MCF 10A (cell line): ENCODE measurements at regions of chr15 and their contacts with region 1.

Region 1: DNA sequence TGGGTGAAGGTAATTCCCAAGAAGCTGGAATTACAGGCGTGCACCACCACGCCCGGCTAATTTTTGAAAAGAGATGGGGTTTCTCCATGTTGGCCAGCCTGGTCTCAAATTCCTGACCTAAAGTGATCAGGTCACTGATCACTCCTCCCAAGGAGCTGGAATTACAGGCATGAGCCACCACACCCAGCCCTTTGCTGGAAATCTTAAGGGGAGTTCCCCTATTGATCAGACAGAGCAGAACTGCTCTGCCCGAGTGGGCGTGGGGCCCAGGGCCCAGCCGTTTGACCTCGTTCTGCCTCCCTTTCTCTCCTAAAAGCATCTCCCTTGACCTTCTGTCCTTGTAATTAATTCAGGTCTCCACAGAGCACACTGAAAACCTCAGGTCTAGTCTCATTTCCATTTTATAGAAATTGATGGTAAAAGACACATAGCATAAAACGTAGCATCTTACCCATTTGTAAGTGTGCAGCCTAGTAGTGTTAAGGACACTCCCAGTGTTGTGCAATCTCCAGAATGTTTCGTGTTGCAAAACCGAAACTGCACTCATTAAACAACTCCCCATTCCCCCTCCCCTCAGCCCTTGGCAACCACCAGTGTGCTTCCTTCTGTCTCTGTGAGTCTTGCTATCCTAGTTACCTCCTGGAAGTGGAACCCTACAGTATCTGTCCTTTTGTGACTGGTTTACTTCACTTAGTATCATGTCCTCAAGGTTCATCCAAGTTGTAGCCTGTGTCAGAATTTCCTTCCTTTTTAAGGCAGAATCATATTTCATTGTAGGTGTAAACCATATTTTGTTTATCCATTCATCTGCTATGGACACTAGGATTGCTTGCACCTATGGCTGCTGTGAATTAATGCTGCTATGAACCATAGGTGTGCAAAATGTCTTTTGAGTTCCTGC is 89.4 kb downstream of the SLCO3A1 start:
- DNase-seq: peak; percentile 99
- H3K4me3 Mint-ChIP-seq: peak overlapping the region; percentile 65
- H3K27ac Mint-ChIP-seq: peak overlapping the region; percentile 95
- H3K4me1 Mint-ChIP-seq: peaks cover 71% of the 10 kb centered on the region
- H3K27me3 Mint-ChIP-seq: no peaks in the 10 kb centered on the region
- CTCF ChIP-seq: no peak

Region 2: GRCh38 chr15:91522663-91523332 is 420.1 kb before region 1 on chr15:
- CTCF ChIA-PET with region 1: no interaction called
- POLR2A ChIA-PET with region 1: no interaction called
- intact Hi-C with region 1: loop called (anchors 5 kb)
- DNase-seq: peak; percentile 56
- H3K4me3 Mint-ChIP-seq: no peak overlapping the region
- H3K27ac Mint-ChIP-seq: no peak overlapping the region
- H3K4me1 Mint-ChIP-seq: peaks cover 13% of the 10 kb centered on the region
- H3K27me3 Mint-ChIP-seq: no peaks in the 10 kb centered on the region
- CTCF ChIP-seq: peak; percentile 43

Region 3: GRCh38 chr15:91652610-91653207 is 290.2 kb before region 1 on chr15:
- CTCF ChIA-PET with region 1: no interaction called
- POLR2A ChIA-PET with region 1: no interaction called
- intact Hi-C with region 1: no loop called
- DNase-seq: no peak
- H3K4me3 Mint-ChIP-seq: no peak overlapping the region
- H3K27ac Mint-ChIP-seq: no peak overlapping the region
- H3K4me1 Mint-ChIP-seq: no peaks in the 10 kb centered on the region
- H3K27me3 Mint-ChIP-seq: peaks cover 3% of the 10 kb centered on the region
- CTCF ChIP-seq: no peak

Region 4: DNA sequence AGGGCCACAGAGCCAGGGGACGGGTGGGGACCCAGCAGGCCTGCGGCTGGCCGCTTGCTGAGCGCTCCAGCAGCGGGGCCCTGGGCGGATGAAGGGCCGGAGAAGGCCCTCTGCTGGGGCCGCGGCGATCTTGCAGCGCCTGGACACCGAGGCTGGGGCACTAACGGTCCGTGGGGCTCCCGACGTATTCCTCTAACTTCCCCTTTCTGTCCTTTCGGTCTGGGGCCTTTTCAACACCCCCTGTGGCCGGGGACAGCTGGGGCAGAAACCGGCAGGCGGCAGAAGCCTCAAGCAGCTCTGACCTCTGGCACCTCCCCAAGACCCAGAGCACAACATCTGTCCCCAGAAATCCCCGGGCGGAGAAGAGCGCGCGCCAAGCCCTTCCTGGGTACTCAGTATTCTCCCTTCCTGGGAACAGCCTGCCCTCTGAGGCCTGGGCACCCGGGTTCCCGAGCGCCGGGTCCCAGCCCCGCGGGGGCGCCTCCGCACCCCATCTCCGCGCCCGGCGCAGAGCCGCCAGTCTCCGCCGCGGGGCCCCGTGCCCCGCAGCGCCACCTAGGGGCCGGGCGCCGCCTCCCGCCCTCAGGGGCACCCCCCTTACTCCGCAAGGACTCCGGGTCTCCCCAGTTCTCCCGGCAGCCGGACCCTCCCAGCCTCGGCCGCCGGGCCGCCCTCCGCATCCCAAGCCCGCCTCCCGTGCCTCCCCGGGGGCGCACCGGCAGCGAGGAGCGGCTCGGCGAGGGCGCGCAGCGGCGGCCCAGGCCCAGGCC is 90.0 kb before region 1 on chr15:
- CTCF ChIA-PET with region 1: interaction called, 152 read pairs
- POLR2A ChIA-PET with region 1: interaction called, 35 read pairs
- intact Hi-C with region 1: loop called (anchors 1 kb)
- DNase-seq: peak; percentile 66
- H3K4me3 Mint-ChIP-seq: peak overlapping the region; percentile 75
- H3K27ac Mint-ChIP-seq: peak overlapping the region; percentile 61
- H3K4me1 Mint-ChIP-seq: peaks cover 42% of the 10 kb centered on the region
- H3K27me3 Mint-ChIP-seq: no peaks in the 10 kb centered on the region
- CTCF ChIP-seq: peak; percentile 78

Region 5: DNA sequence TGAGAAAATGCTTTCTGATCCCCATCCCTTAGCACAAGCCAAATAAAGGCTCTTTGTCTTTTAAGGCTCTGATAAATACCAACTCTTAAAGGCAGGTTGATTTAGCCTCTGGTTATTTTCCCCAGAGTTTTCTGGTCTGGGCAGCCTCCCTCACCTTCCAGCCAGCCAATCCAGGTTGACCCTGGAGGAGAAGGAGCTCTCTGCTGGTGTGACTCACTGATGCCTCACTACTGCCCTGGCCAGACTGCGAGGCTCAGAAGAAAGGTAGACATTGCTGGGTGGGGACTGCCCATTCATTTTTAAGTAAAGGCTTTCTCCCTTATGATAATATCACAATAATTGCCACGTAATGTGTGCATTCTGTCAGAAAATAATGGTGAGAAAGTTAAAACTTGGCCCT is 52.3 kb before region 1 on chr15:
- CTCF ChIA-PET with region 1: interaction called, 14 read pairs
- POLR2A ChIA-PET with region 1: interaction called, 7 read pairs
- intact Hi-C with region 1: no loop called
- DNase-seq: peak; percentile 88
- H3K4me3 Mint-ChIP-seq: no peak overlapping the region
- H3K27ac Mint-ChIP-seq: peak overlapping the region; percentile 34
- H3K4me1 Mint-ChIP-seq: peaks cover 20% of the 10 kb centered on the region
- H3K27me3 Mint-ChIP-seq: no peaks in the 10 kb centered on the region
- CTCF ChIP-seq: no peak

Region 6: DNA sequence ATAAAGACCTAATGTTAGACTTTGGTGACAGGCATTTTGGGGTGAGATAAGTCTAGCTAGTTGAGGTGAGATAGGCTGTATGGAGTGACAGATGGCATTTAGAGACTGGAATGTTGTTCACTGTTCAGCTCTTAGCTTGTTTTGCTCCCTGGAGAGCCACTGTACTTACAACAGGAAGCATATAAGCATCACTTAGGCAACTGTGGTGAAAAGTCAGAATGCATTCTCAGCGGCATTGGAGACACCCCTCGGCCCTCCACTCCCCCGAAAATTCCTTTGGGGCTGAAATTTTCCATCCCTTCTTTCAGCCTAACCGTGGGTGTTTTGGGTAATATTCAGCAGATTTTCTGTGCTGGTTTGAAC is 16.0 kb before region 1 on chr15:
- CTCF ChIA-PET with region 1: interaction called, 21 read pairs
- POLR2A ChIA-PET with region 1: interaction called, 22 read pairs
- intact Hi-C with region 1: no loop called
- DNase-seq: no peak
- H3K4me3 Mint-ChIP-seq: no peak overlapping the region
- H3K27ac Mint-ChIP-seq: no peak overlapping the region
- H3K4me1 Mint-ChIP-seq: peaks cover 15% of the 10 kb centered on the region
- H3K27me3 Mint-ChIP-seq: no peaks in the 10 kb centered on the region
- CTCF ChIP-seq: no peak

Region 7: GRCh38 chr15:91981821-91982801 is 39.2 kb after region 1 on chr15:
- CTCF ChIA-PET with region 1: interaction called, 17 read pairs
- POLR2A ChIA-PET with region 1: no interaction called
- intact Hi-C with region 1: loop called (anchors 5 kb)
- DNase-seq: peak; percentile 13
- H3K4me3 Mint-ChIP-seq: no peak overlapping the region
- H3K27ac Mint-ChIP-seq: no peak overlapping the region
- H3K4me1 Mint-ChIP-seq: peaks cover 6% of the 10 kb centered on the region
- H3K27me3 Mint-ChIP-seq: no peaks in the 10 kb centered on the region
- CTCF ChIP-seq: peak; percentile 21

Region 8: DNA sequence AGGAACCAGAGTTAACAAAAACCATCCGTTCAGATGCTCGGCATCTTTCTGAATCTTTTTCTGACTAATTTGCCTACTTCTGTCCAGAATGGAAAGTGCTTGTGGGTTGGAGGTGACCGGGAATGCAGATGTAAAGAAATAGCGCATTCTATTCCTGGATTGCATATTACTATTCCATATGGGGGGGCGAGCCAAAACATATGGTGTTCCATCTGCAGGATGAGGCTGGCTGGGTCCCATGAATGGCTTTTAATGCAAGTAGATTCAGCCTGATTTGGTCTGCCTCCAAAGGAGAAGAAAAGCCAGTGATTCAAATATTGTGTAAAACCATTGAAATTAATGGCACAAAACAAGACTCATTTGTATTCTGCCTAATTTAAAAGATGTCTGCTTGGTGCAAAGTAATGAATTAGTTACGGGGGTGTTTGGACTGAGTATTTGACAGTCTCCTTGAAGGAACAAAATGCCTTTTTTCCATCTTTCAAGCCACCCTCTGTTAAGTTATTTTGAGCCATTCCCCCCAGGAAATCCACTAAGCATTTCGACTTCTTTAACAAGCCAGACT is 549.7 kb after region 1 on chr15:
- CTCF ChIA-PET with region 1: no interaction called
- POLR2A ChIA-PET with region 1: no interaction called
- intact Hi-C with region 1: no loop called
- DNase-seq: no peak
- H3K4me3 Mint-ChIP-seq: no peak overlapping the region
- H3K27ac Mint-ChIP-seq: no peak overlapping the region
- H3K4me1 Mint-ChIP-seq: no peaks in the 10 kb centered on the region
- H3K27me3 Mint-ChIP-seq: peaks cover 60% of the 10 kb centered on the region
- CTCF ChIP-seq: no peak